ENCODE measurements at regions of chr6 and their contacts with region 1.

Region 1: GRCh38 chr6:33570806-33571636 is 9.1 kb downstream of the BAK1 start:
- DNase-seq: peak; percentile 97
- H3K4me3 Mint-ChIP-seq: peak overlapping the region; percentile 82
- H3K27ac Mint-ChIP-seq: peak overlapping the region; percentile 99
- H3K4me1 Mint-ChIP-seq: peaks cover 41% of the 10 kb centered on the region
- H3K27me3 Mint-ChIP-seq: no peaks in the 10 kb centered on the region

Region 2: GRCh38 chr6:33535104-33535603 is 35.9 kb before region 1 on chr6:
- CTCF ChIA-PET with region 1: interaction called, 3 read pairs
- POLR2A ChIA-PET with region 1: interaction called, 9 read pairs
- intact Hi-C with region 1: loop called (anchors 2 kb)
- DNase-seq: no peak
- H3K4me3 Mint-ChIP-seq: no peak overlapping the region
- H3K27ac Mint-ChIP-seq: no peak overlapping the region
- H3K4me1 Mint-ChIP-seq: peaks cover 16% of the 10 kb centered on the region
- H3K27me3 Mint-ChIP-seq: no peaks in the 10 kb centered on the region

Region 3: GRCh38 chr6:33549196-33549595 is 21.8 kb before region 1 on chr6:
- CTCF ChIA-PET with region 1: no interaction called
- POLR2A ChIA-PET with region 1: no interaction called
- intact Hi-C with region 1: loop called (anchors 2 kb)
- DNase-seq: no peak
- H3K4me3 Mint-ChIP-seq: no peak overlapping the region
- H3K27ac Mint-ChIP-seq: no peak overlapping the region
- H3K4me1 Mint-ChIP-seq: peaks cover 19% of the 10 kb centered on the region
- H3K27me3 Mint-ChIP-seq: no peaks in the 10 kb centered on the region